Activated T-helper 2 cell treated with anti-CD3 and anti-CD28 coated beads, Interferon-gamma antibody, Interleukin-2, Interleukin-4, amounts not matched to agents 10 μg/mL and 5 μg/mL and 100 μg/mL, durations not matched to agents 14 hours and 24 hours and 36 hours (primary cell): ENCODE measurements at regions of chr19 and their contacts with region 1.

Region 1: DNA sequence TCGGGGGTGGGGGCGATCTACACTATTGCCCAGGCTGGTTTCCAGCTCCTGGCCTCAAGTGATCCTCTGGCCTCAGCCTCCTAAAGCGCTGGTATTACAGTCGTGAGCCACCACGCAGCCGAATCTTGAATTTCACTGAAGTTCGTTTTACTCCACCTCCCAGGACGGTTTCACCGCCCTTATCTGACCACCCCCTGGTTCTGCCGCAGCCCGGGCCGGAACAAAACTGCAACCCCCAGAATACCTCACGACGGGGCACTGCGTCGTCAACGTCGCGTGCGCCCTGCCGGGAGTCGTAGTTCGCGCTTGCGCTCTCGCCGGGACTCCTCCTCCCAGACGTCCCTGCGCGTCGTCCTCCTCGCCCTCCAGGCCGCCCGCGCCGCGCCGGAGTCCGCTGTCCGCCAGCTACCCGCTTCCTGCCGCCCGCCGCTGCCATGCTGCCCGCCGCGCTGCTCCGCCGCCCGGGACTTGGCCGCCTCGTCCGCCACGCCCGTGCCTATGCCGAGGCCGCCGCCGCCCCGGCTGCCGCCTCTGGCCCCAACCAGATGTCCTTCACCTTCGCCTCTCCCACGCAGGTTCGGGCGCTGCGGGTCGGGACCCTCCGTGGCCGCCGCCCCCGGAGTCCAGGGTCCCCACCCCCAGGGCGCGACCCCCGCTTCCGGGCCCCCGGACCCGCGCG is at the start of gene ATP5F1D:
- DNase-seq: peak; percentile 92
- H3K4me3 Mint-ChIP-seq: peak within 1 kb of the TSS; percentile 90
- H3K27ac Mint-ChIP-seq: peak within 1 kb of the TSS; percentile 88
- H3K4me1 Mint-ChIP-seq: peaks cover 22% of the 10 kb centered on the region
- H3K27me3 Mint-ChIP-seq: peaks cover 13% of the 10 kb centered on the region
- total RNA-seq, gene ATP5F1D: 233 and 240 TPM in 2 replicates

Region 2: DNA sequence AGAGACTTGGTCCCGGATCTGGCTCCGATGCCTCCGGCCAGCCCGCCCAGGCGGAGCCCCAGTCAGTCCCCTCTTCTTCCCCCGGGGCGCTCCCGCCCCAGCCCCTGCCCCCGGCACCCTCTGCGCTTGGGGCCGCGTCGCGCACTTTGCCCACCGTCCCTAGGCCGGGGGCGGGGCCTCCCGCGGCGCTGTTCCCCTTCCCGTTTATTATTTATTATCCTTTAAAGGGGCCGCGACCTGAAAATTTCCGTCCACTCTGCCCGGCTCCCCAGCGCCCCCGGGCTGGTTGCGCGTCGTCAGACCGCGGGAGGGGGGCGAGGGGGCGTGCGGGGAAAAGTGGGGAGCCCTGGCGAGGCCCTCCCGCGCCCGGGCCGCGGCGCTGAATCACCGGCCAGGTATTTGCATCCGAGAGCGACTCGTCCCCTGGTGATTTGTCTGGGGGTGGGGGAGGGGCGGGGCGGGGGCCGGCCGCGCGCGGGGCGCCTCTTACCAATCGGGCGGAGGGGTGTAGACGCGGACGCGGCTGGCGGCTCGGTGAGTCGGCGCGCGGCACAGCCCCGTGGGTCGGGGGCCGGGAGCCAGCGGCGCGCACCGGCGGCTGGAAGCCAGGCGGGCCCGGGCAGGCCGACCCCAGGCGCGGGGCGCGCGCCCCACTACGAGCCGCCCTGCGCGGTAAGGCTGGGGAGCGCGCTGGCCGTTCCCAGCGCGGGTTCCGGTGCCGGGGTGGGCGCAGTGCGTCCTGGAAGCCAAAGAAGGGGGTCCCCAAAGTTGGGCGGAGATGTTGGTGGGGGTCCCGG is 315.8 kb before region 1 on chr19 and contains the start of gene ARID3A:
- intact Hi-C with region 1: loop called (anchors 5 kb)
- DNase-seq: peak; percentile 77
- H3K4me3 Mint-ChIP-seq: peak within 1 kb of the TSS; percentile 83
- H3K27ac Mint-ChIP-seq: peak within 1 kb of the TSS; percentile 80
- H3K4me1 Mint-ChIP-seq: peaks cover 10% of the 10 kb centered on the region
- H3K27me3 Mint-ChIP-seq: peaks cover under 1% of the 10 kb centered on the region
- total RNA-seq, gene ARID3A: 42.0 and 42.6 TPM in 2 replicates

Region 3: GRCh38 chr19:1039646-1040475 is 201.7 kb before region 1 on chr19 and contains the start of gene ABCA7:
- intact Hi-C with region 1: loop called (anchors 2 kb)
- DNase-seq: peak; percentile 99
- H3K4me3 Mint-ChIP-seq: peak within 1 kb of the TSS; percentile 96
- H3K27ac Mint-ChIP-seq: peak within 1 kb of the TSS; percentile 68
- H3K4me1 Mint-ChIP-seq: peaks cover 36% of the 10 kb centered on the region
- H3K27me3 Mint-ChIP-seq: no peaks in the 10 kb centered on the region
- total RNA-seq, gene ABCA7: 17.2 and 19.6 TPM in 2 replicates

Region 4: GRCh38 chr19:1094975-1095701 is 146.4 kb before region 1 on chr19 and contains the start of gene POLR2E:
- intact Hi-C with region 1: loop called (anchors 5 kb)
- DNase-seq: peak; percentile 97
- H3K4me3 Mint-ChIP-seq: peak within 1 kb of the TSS; percentile 92
- H3K27ac Mint-ChIP-seq: peak within 1 kb of the TSS; percentile 89
- H3K4me1 Mint-ChIP-seq: peaks cover 33% of the 10 kb centered on the region
- H3K27me3 Mint-ChIP-seq: no peaks in the 10 kb centered on the region
- total RNA-seq, gene POLR2E: 260 and 272 TPM in 2 replicates

Region 5: GRCh38 chr19:1131738-1132551 is 109.6 kb before region 1 on chr19:
- intact Hi-C with region 1: loop called (anchors 5 kb)
- DNase-seq: peak; percentile 84
- H3K4me3 Mint-ChIP-seq: peak overlapping the region; percentile 86
- H3K27ac Mint-ChIP-seq: peak overlapping the region; percentile 81
- H3K4me1 Mint-ChIP-seq: peaks cover 12% of the 10 kb centered on the region
- H3K27me3 Mint-ChIP-seq: no peaks in the 10 kb centered on the region

Region 6: DNA sequence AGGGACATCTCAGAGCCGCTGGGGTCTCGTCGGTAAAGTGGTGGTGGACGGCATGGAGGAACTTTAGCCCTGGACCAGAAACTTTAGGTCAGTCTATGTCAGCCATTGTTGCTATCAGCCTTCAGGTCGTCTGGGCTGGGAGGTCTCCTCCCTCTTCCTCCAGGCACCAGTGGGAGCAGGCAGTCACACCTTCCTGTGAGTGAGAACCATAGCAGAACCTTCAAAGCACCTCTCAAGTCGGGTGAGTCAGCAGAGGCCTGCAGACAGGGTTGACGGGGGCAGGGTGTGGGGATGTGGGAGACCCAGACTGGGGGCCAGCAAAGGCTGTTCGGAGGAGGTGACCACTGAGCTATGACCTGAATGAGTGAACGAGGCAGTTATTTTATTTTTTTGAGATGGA is 52.1 kb before region 1 on chr19:
- intact Hi-C with region 1: loop called (anchors 5 kb)
- DNase-seq: peak; percentile 25
- H3K4me3 Mint-ChIP-seq: no peak overlapping the region
- H3K27ac Mint-ChIP-seq: peak overlapping the region; percentile 51
- H3K4me1 Mint-ChIP-seq: peaks cover 16% of the 10 kb centered on the region
- H3K27me3 Mint-ChIP-seq: no peaks in the 10 kb centered on the region

Region 7: DNA sequence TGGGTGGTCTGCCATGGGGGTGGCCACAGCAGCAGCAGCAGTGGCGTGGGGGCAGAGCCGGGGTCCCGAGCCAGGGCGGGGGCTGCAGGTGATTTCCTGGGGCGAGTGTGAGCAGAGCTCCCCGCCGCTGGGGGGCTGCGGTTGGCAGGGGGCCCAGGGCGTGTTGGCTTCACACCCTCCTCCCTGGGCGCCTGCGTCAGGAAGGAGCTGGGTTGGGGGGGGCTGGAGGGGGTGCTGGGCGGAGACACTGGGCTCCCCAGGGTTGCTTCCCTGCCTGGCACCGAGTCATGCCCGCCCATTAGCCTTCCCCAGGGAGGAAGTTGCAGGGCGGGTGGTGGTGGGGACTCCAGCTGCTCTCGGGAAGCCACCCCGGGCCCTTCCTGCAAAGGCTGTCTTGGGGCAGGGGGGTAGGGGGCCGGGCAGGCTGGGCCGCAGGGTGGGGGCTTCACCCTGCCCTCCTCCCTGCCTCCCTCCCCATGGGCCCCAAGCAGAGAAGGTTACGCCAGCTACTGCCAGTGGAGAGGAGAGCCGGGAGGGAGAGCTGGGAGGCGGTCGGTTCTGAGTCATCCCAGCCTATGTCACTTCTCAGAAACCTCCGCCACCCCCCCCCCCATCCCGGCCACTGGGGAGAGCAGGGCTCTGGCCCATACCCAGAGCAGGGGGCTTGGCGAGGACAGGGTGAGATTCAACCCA is 11.4 kb after region 1 on chr19:
- intact Hi-C with region 1: no loop called
- DNase-seq: peak; percentile 67
- H3K4me3 Mint-ChIP-seq: peak overlapping the region; percentile 78
- H3K27ac Mint-ChIP-seq: peak overlapping the region; percentile 88
- H3K4me1 Mint-ChIP-seq: peaks cover 11% of the 10 kb centered on the region
- H3K27me3 Mint-ChIP-seq: no peaks in the 10 kb centered on the region

Region 8: GRCh38 chr19:1269065-1269477 is 27.5 kb after region 1 on chr19 and contains the start of gene CIRBP:
- intact Hi-C with region 1: loop called (anchors 1 kb)
- DNase-seq: peak; percentile 99
- H3K4me3 Mint-ChIP-seq: peak within 1 kb of the TSS; percentile 93
- H3K27ac Mint-ChIP-seq: peak within 1 kb of the TSS; percentile 91
- H3K4me1 Mint-ChIP-seq: peaks cover 47% of the 10 kb centered on the region
- H3K27me3 Mint-ChIP-seq: no peaks in the 10 kb centered on the region
- total RNA-seq, gene CIRBP: 214 and 226 TPM in 2 replicates